Activated CD4-positive, alpha-beta T cell treated with anti-CD3 and anti-CD28 coated beads, Interleukin-2, amount 10 ng/mL, durations not matched to agents 24 days and 14 days (primary cell): ENCODE measurements at regions of chr6 and their contacts with region 1.

Region 1: DNA sequence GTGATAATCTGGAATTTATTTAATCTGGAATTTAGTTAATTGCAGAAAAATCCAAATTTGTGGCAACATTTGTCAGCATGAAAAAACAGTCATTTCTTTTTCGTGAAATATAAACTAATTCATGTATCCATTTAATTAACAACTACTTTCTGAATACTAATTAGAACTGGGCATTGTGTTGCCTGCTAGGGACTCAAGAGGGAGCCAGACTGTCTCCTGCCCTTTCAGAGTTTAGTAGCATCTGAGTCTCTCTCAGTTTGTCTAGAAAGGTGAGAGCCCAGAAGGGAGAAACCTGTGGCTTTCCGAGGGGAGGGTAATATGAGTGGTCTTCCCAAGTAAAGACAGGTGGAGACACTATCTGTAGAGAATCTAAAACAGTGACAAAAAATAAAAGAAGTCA is 210.9 kb upstream of the HDDC2 start:
- DNase-seq: no peak
- H3K4me3 Mint-ChIP-seq: no peak overlapping the region
- H3K27ac Mint-ChIP-seq: no peak overlapping the region
- H3K4me1 Mint-ChIP-seq: no peaks in the 10 kb centered on the region
- H3K27me3 Mint-ChIP-seq: peaks cover 14% of the 10 kb centered on the region

Region 2: DNA sequence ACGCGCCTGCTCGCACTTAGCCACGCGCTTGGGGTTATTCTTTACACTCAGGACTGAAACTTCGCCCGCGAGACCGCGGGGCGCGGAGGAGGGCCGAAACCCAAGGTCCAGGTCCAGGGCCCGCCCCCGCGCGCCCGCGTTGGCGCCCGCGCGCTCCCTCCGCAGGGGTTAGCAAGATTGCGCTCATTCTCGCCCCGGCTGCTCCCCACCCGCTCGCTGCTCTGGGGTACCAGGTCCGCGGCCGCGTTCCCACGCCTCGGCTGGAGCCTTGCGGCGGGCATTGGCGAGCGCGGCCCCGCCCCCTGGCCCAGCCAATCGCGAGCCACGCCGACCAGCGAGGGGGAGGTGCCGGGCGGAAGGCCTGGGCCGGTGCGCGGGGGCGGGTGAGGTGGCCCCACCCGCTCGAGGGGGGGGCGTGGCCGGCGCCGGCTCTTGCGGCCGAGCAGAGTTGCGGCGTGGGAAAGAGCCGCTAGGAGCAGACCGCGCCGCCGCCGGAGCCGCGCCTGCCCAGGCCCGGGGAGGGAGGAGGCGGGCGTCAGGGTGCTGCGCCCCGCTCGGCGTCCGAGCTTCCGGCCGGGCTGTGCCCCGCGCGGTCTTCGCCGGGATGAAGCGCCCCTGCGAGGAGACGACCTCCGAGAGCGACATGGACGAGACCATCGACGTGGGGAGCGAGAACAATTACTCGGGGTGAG is 236.7 kb after region 1 on chr6 and contains the start of gene HEY2:
- intact Hi-C with region 1: loop called (anchors 5 kb)
- DNase-seq: peak; percentile 96
- H3K4me3 Mint-ChIP-seq: peak within 1 kb of the TSS; percentile 85
- H3K27ac Mint-ChIP-seq: peak within 1 kb of the TSS; percentile 42
- H3K4me1 Mint-ChIP-seq: peaks cover 33% of the 10 kb centered on the region
- H3K27me3 Mint-ChIP-seq: peaks cover 77% of the 10 kb centered on the region
- total RNA-seq, gene HEY2: not detected in 2 replicates